ENCODE measurements at regions of chr9 and their contacts with region 1.

Region 1: GRCh38 chr9:85600675-85601263 is 141.0 kb downstream of the AGTPBP1 start:
- DNase-seq: no peak
- ATAC-seq: peak; percentile 44 to 56

Region 2: DNA sequence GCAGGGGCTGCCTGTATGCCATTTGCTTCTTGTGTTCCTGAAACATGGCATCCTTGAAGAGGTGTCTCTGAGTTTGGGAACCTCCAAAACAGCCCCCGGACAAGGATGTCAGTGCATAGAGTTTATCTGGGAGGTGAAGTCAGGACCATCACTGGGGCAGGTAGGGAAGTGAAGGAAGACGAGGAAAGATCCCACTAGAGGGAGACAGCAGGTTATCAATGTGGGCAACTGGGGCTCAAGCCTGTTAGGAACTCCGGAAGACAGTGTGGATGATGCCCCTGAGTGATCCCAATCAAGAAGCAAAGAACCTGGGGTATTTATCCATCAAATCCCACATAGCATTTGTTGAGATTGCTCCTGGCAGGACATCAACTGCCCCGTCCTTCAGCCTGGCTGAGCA is 92.2 kb before region 1 on chr9:
- intact Hi-C with region 1: loop called in 1 of 2 experiments (anchors 10 kb)
- DNase-seq: no peak
- ATAC-seq: no peak

Region 3: DNA sequence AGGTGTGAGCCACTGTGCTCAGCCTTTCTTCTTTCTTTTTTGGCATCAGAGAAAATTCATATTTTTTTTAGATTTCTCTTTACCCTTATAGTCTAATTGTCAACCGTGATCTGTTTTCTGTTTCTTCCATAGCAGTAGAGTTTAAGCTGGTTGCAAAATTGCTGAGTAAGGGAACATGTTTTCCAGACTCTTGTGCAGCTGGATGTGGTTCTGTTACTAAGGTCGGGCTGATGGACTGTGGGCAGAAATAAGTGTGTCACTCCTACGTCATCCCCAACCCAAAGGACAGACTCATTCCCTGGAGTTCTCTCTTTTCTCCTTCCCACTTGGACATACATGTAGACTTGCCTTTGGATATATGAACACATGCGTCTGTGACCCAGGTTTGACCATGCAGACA is 562.7 kb after region 1 on chr9:
- intact Hi-C with region 1: no loop called
- DNase-seq: no peak
- ATAC-seq: no peak